ENCODE measurements at regions of chr9 and their contacts with region 1.

Region 1: DNA sequence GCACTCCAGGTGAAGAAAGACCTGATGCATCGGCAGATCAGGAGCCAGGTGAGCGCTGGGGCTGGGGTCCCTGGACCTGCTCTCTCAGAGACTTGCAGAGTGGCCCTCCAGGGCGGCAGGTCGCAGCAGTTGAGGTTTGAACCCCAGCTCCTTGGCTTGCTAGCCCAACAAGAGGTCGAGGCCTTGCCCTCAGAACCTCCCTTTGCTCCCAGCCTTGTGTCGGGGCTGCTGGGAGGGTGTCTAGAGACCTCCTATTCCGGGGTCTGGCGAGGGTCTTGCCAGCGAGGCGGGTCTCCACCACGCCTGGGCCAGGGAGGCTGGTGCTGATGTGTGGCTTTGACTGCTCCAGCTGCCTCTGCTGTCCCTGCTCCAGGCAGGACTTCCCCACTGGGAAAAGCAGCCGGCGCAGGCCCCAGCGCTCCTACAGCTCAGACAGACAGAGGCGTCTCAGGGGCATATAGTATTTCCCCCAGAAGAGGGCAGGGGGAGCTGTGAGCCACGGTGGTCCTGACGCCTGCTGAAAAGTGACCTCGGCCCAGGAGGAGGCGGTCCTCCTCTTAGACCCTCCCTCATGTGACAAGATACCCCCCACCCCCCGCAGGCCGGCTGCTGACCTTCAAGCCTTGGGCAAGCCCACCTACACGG is 38.3 kb downstream of the LRSAM1 start:
- DNase-seq: no peak
- ATAC-seq: no peak
- H3K4me3 ChIP-seq: no peak overlapping the region
- H3K27ac ChIP-seq: no peak overlapping the region
- H3K4me1 ChIP-seq: peaks cover 0 to 22% (median 7%) of the 10 kb centered on the region in 9 donors
- H3K27me3 ChIP-seq: no peaks in the 10 kb centered on the region
- CTCF ChIP-seq: no peak

Region 2: GRCh38 chr9:127300886-127301447 is 188.6 kb before region 1 on chr9:
- intact Hi-C with region 1: no loop called
- DNase-seq: no peak
- ATAC-seq: peak in 6 of 8 donors; percentile 63 to 86 (median 80)
- H3K4me3 ChIP-seq: no peak overlapping the region
- H3K27ac ChIP-seq: peak overlapping the region in 5 of 10 donors; percentile 7 to 68 (median 26)
- H3K4me1 ChIP-seq: peaks cover 0 to 16% (median 10%) of the 10 kb centered on the region in 9 donors
- H3K27me3 ChIP-seq: no peaks in the 10 kb centered on the region
- CTCF ChIP-seq: no peak

Region 3: DNA sequence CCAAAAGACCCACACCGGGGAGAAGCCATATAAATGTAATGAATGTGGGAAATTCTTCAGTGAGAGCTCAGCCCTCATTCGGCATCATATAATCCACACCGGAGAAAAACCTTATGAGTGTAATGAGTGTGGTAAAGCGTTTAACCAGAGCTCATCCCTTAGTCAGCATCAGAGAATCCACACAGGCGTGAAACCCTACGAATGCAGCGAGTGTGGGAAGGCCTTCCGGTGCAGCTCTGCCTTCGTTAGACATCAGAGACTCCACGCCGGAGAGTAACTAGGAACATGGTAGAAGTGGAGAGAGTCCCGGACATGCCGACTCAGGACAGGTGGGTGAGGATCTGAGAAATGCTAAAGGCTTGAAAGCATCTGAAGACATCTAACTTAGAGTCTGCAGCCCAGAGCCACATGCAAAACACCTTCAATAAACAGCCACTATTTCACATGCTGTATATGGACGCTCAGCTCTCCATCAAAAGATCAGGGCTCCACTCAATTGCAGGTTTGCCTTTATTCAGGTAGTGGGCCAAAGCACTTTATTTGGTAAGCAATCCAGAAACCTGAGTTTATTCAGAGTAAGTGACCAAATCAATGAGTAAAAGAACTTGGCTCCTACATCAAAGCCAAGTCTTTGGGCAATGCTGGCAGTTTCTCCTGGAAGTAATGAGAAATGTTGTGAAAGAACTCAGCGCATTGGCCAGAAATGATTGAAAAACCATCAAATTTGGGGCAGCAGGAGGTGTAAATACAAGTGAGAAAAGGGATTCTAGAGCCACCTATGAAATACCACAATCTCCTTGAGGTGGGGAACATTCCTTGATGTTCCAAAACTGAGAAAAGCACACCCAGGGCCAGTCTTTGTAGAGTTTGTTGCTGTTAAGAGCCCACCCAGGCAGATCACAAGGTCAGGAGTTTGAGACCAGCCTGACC is 44.4 kb before region 1 on chr9:
- intact Hi-C with region 1: no loop called
- DNase-seq: no peak
- ATAC-seq: no peak
- H3K4me3 ChIP-seq: no peak overlapping the region
- H3K27ac ChIP-seq: no peak overlapping the region
- H3K4me1 ChIP-seq: peaks cover 3 to 24% (median 18%) of the 10 kb centered on the region in 9 donors
- H3K27me3 ChIP-seq: no peaks in the 10 kb centered on the region
- CTCF ChIP-seq: no peak

Region 4: DNA sequence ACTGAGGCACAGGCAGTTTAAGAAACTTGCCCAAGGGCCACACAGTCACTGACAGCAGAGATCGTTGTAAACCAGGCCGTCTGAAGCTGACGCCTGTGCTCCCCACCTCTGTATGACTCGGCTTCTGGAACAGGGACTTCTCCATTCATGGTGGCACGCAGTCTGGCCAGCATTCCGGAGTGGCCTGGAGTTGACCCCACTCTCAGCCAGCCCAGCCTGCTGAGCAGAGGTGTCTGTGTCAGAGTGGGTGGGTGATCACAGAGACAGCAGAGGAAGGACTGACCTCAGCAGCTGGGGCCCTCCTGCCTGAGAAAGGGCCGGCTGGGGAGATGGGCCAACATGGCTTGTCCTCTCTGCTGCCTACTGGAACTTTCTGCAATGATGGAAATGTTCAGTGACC is 25.7 kb before region 1 on chr9:
- intact Hi-C with region 1: loop called in 1 of 10 experiments (anchors 2 kb)
- DNase-seq: peak; percentile 55 to 61
- ATAC-seq: peak; percentile 83 to 96 (median 90)
- H3K4me3 ChIP-seq: no peak overlapping the region
- H3K27ac ChIP-seq: peak overlapping the region in 9 of 10 donors; percentile 10 to 83 (median 61)
- H3K4me1 ChIP-seq: peaks cover 0 to 12% (median 4%) of the 10 kb centered on the region in 9 donors
- H3K27me3 ChIP-seq: no peaks in the 10 kb centered on the region
- CTCF ChIP-seq: no peak

Region 5: GRCh38 chr9:127545196-127546124 is 55.9 kb after region 1 on chr9:
- intact Hi-C with region 1: no loop called
- DNase-seq: peak in 1 of 2 donors; percentile 16
- ATAC-seq: peak in 7 of 8 donors; percentile 15 to 43 (median 22)
- H3K4me3 ChIP-seq: no peak overlapping the region
- H3K27ac ChIP-seq: peak overlapping the region; percentile 12 to 76 (median 54)
- H3K4me1 ChIP-seq: peaks cover 16 to 98% (median 72%) of the 10 kb centered on the region in 9 donors
- H3K27me3 ChIP-seq: no peaks in the 10 kb centered on the region
- CTCF ChIP-seq: no peak

Region 6: DNA sequence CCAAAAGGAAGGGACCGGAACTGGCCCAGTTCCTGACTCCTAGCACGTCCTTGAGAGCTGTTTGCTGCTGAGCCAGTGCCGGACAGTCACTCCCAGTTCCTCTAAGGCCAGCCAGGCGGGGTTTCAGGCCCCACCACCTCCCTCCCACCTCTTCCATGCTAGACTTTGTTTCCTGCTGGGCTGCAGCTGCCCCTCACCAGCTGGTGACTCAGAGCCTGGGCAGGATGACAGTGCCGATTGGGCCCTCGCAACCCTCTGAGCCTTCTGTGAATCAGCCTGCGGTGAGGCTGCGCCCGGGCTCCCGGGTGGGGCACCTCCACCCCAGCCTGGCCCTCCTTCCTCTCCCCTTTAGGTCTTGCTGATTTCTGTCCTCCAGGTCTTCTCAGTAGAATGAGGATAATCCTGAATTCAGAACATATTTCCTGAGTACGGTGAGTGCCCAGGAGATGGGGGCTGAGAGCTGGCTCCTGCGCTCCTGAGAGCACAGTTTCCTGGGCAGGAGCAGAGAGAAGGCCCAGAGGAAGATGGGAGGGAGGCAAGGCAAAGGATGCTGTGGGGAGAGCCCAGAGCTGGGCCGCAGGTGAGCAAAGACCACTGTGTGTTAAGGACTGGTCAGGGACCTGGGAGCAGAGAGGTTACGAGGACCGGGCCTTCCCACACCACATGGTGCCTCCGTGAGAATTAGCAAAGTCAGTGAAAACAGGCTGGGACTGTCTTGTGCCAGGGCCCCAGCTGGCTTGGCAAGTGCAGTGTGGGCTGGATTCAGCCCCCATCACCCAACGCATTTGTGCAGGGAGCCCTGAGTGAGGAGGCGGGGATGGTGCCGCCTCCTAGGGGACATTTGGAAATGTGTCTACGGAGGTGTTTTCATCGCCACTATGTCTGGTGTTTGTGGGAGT is 89.6 kb after region 1 on chr9:
- intact Hi-C with region 1: no loop called
- DNase-seq: peak; percentile 83 to 85
- ATAC-seq: peak; percentile 92 to 96 (median 94)
- H3K4me3 ChIP-seq: peak overlapping the region in 8 of 10 donors; percentile 12 to 46 (median 30)
- H3K27ac ChIP-seq: peak overlapping the region; percentile 47 to 92 (median 85)
- H3K4me1 ChIP-seq: peaks cover 10 to 58% (median 17%) of the 10 kb centered on the region in 9 donors
- H3K27me3 ChIP-seq: no peaks in the 10 kb centered on the region
- CTCF ChIP-seq: peak in 7 of 9 donors; percentile 28 to 51 (median 32)

Region 7: GRCh38 chr9:127698985-127699670 is 209.5 kb after region 1 on chr9:
- intact Hi-C with region 1: loop called in 1 of 10 experiments (anchors 10 kb)
- DNase-seq: peak; percentile 96 to 99
- ATAC-seq: peak; percentile 98 to 99 (median 99)
- H3K4me3 ChIP-seq: peak overlapping the region in 8 of 10 donors; percentile 11 to 49 (median 38)
- H3K27ac ChIP-seq: peak overlapping the region; percentile 68 to 93 (median 86)
- H3K4me1 ChIP-seq: peaks cover 0 to 17% (median 5%) of the 10 kb centered on the region in 9 donors
- H3K27me3 ChIP-seq: no peaks in the 10 kb centered on the region
- CTCF ChIP-seq: peak in 5 of 9 donors; percentile 13 to 32 (median 24)

Measured in heart right ventricle (tissue), 16 donors.